Endothelial cell of umbilical vein (primary cell): ENCODE measurements at regions of chr2 and their contacts with region 1.

Region 1: DNA sequence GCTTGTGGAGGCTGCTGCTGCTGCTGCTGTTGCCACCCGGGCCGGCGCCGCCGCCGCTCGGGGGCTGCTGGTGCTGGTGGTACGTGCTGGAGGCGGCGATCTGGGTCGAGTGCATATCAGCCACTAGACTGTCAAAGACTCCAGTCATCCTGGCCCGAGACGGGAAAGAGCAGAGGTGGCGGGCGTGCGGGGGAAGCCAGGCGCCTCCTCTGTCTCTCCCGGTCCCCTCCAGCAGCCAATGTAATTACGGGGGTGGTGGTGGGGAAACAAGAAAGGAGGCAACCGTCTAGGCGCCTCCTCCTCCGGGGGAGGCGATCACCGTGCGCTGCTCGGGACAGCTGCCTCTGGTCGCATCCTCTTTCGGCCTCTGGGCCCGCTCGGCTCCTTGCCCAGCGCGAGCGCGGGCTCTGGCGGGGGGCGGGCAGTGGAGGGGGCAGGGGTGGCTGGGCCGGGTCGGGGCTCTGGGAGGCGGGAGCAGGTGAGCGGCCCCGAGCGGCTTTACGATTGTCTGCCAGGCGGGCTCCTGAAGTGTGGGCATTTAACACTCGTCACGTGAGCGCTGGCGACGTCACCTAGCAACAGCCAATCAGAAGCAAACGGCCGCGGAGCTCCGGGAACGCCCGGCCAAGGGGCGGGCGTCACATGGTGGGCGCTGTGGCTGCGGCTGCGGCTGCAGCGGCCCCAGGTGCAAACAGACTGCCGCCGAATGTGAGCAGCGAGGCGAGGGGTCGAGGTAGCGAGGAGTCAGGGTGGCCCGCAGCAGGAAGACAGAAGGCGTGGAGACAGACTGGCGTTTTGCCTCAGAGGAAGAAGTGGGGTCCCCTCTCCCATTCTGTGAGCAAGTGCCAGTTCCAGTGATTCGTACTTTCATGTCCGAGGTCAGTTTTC is at the start of gene DLX2:
- DNase-seq: peak; percentile 87
- H3K4me3 ChIP-seq: peak within 1 kb of the TSS; percentile 12 to 52 (median 42)
- H3K27ac ChIP-seq: no peak within 1 kb of the TSS
- H3K4me1 ChIP-seq: peaks cover 39% of the 10 kb centered on the region
- H3K27me3 ChIP-seq: peaks cover 39 to 65% of the 10 kb centered on the region in 2 experiments
- CTCF ChIP-seq: no peak
- POLR2A ChIP-seq: no peak
- total RNA-seq, gene DLX2: not detected in 2 replicates

Region 2: DNA sequence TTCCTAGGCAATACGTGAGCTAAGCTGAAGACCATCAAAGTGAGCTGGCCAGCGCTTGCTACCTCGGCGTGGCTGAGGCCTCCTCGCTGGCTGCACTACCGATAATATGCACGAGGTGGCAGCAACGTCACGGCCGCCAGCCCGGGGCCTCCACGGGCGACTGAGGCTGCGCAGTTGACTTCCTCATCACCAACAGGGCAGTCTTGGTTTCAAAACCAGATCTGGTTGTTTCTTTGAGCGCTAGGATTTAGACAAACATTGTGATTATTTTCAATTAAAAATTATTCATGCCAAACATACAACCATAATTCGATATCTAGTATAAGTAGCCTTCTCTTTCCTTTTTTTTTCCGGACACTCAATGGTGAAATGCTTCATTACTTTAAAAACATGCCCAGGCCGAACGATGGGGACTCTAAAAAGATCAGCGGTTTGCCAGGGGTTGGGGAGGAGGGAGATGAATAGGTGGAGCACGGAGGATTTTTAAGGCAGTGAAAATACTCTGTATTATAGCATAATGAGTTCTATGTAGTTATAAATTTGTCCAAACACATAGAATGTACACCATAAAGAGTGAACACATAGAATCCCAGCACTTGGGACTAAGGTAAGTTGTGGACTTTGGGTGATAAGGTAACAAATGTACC is 528.4 kb before region 1 on chr2:
- CTCF ChIA-PET with region 1: interaction called, 11 read pairs
- POLR2A ChIA-PET with region 1: no interaction called
- dilution Hi-C with region 1: no loop called
- intact Hi-C with region 1: loop called (anchors 1 kb)
- DNase-seq: peak; percentile 84
- H3K4me3 ChIP-seq: no peak overlapping the region
- H3K27ac ChIP-seq: no peak overlapping the region
- H3K4me1 ChIP-seq: no peaks in the 10 kb centered on the region
- H3K27me3 ChIP-seq: peaks cover 2 to 3% of the 10 kb centered on the region in 2 experiments
- CTCF ChIP-seq: peak; percentile 91 to 94
- POLR2A ChIP-seq: no peak

Region 3: DNA sequence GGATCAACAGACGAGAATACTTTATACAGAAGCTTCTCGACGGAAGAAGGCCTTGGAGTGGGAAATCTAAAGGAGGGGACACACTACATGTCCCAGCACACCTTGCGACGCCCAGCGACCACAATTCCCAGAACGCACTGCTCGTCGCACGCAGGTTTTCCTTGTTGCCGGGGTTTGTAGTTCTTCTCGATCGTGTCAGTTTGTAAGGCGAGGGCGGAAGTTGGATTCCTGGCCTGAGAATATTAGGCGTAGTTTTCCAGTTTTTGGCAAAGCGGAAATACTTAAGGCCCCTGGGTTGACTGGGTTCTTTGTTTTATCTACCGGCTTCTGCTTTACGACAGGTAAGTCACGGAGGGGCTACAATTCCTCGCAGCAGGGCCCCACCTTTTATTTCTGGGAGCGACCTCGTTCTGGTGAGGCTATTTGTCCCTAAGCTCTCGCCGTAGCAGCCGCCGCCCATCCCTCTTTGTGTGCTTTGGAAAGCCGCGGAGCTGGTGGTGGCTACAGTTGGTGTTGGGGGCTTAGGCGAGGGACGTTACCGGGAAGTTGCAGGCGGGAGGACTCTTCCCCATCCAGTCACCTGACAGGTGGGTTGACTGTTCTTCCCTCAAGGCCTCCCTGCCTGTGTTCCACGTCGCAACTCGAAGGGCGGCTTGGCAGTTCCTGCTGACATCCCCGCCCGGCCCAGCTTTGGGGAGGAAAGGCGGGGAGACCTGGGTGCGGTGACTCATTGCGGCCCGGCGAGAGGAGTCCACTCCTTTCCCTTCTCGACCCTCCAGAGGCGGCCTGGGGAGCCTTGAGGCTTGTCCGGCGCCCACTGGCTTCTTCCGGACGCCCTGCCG is 415.1 kb before region 1 on chr2 and contains the start of gene DYNC1I2:
- CTCF ChIA-PET with region 1: interaction called, 6 read pairs
- POLR2A ChIA-PET with region 1: no interaction called
- dilution Hi-C with region 1: no loop called
- intact Hi-C with region 1: loop called (anchors 5 kb)
- DNase-seq: peak; percentile 97
- H3K4me3 ChIP-seq: peak within 1 kb of the TSS; percentile 84 to 97 (median 96)
- H3K27ac ChIP-seq: peak within 1 kb of the TSS; percentile 75
- H3K4me1 ChIP-seq: peaks cover 5% of the 10 kb centered on the region
- H3K27me3 ChIP-seq: peaks cover 3 to 4% of the 10 kb centered on the region in 2 experiments
- CTCF ChIP-seq: no peak
- POLR2A ChIP-seq: peak; percentile 88
- total RNA-seq, gene DYNC1I2: 138 and 144 TPM in 2 replicates

Region 4: DNA sequence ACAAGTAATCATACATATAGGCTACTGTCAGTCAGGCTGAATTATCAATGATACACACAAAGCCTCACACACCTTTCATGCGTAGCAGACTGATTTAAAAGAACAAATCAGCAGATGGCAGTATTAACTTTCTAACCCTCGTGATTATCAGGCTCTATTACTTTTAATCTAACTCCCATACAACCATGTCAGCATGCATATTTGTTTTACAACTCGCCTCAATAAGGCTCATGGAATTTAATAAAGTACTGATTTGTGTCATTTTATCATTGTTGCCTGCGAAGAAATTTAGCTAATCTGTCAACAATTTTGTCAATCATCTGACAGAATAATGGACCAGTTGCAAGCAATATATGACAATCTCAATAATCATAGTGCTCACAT is 291.4 kb before region 1 on chr2:
- CTCF ChIA-PET with region 1: interaction called, 11 read pairs
- POLR2A ChIA-PET with region 1: no interaction called
- dilution Hi-C with region 1: no loop called
- intact Hi-C with region 1: loop called (anchors 1 kb)
- DNase-seq: peak; percentile 61
- H3K4me3 ChIP-seq: no peak overlapping the region
- H3K27ac ChIP-seq: no peak overlapping the region
- H3K4me1 ChIP-seq: peaks cover 6% of the 10 kb centered on the region
- H3K27me3 ChIP-seq: no peaks in the 10 kb centered on the region
- CTCF ChIP-seq: peak in 1 of 2 donors; percentile 10
- POLR2A ChIP-seq: no peak

Region 5: DNA sequence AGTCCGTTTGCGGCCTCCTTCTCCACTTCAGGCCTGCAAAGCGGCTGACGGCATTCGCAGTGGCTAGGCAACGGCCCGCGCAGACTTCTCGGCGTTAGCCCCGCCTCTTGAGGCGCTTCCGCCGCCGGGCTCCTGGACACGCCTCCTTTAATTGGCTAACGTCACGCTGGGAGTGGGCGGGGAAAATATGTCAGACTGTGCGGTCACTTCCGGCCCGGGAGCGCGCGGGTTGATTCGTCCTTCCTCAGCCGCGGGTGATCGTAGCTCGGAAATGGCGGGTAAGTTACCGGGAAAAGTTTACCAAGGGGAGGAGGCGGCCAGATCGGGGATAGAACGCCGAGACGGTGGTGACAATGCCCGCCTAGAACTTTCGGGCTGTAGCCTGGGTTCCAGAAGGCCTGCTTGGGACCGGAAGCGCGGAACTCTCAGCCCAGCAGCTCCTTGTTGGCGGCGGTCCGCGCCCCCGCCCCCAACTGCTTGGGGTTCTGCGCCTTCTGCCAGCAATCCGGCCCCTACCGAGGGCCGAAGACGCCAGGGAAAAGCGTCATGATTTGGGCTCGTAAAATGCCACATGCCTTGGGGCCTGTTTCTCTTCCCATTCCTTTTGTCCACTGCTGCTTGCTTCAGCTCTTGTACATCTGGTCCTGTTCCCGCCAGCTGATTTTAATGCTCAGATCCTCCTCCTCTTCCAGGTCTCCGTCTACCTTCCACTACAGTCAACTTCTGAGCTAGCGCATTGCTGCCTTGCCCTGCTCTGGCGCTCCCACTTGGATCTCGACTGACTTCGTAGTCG is 180.2 kb before region 1 on chr2 and contains the start of gene HAT1:
- CTCF ChIA-PET with region 1: interaction called, 6 read pairs
- POLR2A ChIA-PET with region 1: no interaction called
- dilution Hi-C with region 1: no loop called
- intact Hi-C with region 1: loop called (anchors 1 kb)
- DNase-seq: peak; percentile 99
- H3K4me3 ChIP-seq: peak within 1 kb of the TSS; percentile 32 to 79 (median 57)
- H3K27ac ChIP-seq: peak within 1 kb of the TSS; percentile 77
- H3K4me1 ChIP-seq: peaks cover 13% of the 10 kb centered on the region
- H3K27me3 ChIP-seq: no peaks in the 10 kb centered on the region
- CTCF ChIP-seq: no peak
- POLR2A ChIP-seq: peak; percentile 59
- total RNA-seq, gene HAT1: 49.7 and 50.3 TPM in 2 replicates

Region 6: DNA sequence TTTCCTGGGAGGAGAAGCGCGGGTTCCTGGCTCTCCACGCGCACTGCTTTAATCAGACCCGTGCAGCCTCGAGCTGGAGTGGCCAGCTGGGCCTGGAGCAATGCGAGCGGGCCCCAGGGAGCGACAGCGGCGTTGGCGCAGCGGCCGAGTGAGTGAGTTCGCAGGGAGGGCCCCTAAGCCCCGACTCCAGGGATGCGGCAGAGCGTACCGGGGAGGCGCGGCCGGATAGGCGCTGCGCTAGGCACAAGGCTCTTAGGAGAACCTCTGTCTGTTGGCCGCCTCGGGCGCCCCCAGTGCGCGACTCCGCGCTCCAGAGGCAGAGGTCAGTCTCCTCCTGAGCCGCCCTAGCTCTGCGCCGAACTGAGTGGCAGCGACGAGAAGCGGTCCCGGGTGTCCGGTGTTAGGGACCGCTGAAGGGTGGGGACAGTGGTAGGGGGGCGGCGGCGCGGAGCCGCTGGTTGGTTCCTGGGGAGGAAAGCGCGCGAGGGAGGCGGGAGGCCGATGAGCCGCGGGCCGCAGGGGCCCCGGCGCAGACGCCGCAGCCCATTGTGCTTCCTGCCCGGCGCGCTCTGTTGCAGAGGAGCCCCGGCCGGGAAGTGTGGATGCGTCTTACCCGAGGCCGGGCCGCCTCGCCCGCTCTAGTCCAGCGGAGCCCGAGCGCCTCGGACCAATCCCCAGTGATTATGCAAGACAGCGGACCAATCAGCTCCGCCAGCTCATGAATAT is 17.7 kb before region 1 on chr2:
- CTCF ChIA-PET with region 1: interaction called, 12 read pairs
- POLR2A ChIA-PET with region 1: no interaction called
- dilution Hi-C with region 1: no loop called
- intact Hi-C with region 1: loop called (anchors 1 kb)
- DNase-seq: peak; percentile 83
- H3K4me3 ChIP-seq: peak overlapping the region; percentile 26 to 40 (median 30)
- H3K27ac ChIP-seq: no peak overlapping the region
- H3K4me1 ChIP-seq: peaks cover 20% of the 10 kb centered on the region
- H3K27me3 ChIP-seq: peaks cover 92 to 100% of the 10 kb centered on the region in 2 experiments
- CTCF ChIP-seq: no peak
- POLR2A ChIP-seq: no peak

Region 7: DNA sequence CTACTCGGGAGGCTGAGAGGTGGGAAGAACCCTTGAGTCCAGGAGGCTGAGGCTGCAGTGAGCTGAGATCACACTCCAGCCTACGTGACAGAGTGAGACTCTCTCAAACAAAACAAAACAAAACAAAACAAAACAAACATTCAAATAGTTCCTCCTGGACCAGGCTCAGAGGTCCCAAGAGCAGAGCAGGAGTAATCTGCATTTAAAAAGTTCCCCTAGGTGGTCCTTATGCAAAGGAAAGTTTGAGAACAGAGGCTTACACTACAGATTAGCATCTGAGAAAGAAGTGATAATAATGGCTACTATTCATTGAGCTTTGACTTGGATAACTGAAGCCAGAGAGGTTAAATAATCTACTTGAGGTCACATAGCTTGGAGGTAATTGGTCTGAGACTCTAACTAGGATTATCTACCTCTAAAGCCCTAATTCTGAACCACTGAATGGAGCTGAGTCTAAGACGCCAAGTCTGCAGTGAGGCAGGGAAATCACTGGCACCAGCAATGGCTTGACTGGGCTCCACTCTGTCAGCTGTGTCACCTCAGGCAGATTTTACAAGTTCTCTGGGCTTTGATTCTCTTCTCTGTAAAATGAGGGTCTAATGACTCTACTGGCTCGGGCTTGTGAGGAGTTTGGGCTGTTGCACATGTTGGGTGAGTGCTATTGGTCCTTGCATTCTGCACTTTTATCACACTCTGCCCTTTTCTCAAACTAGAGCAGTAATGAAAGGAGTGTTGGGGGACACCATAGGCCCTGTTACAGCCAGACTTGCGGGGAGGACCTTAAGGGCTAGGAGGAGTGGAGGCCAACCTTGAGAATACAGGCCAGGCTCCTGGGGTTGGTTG is 29.3 kb after region 1 on chr2:
- CTCF ChIA-PET with region 1: interaction called, 37 read pairs
- POLR2A ChIA-PET with region 1: no interaction called
- dilution Hi-C with region 1: no loop called
- intact Hi-C with region 1: no loop called
- DNase-seq: no peak
- H3K4me3 ChIP-seq: no peak overlapping the region
- H3K27ac ChIP-seq: no peak overlapping the region
- H3K4me1 ChIP-seq: no peaks in the 10 kb centered on the region
- H3K27me3 ChIP-seq: peaks cover 3% of the 10 kb centered on the region in 2 experiments
- CTCF ChIP-seq: no peak
- POLR2A ChIP-seq: no peak

Region 8: GRCh38 chr2:172153156-172153555 is 50.5 kb after region 1 on chr2:
- CTCF ChIA-PET with region 1: no interaction called
- POLR2A ChIA-PET with region 1: no interaction called
- dilution Hi-C with region 1: no loop called
- intact Hi-C with region 1: no loop called
- DNase-seq: no peak
- H3K4me3 ChIP-seq: no peak overlapping the region
- H3K27ac ChIP-seq: no peak overlapping the region
- H3K4me1 ChIP-seq: no peaks in the 10 kb centered on the region
- H3K27me3 ChIP-seq: peaks cover 14 to 17% of the 10 kb centered on the region in 2 experiments
- CTCF ChIP-seq: no peak
- POLR2A ChIP-seq: no peak